ENCODE measurements at regions of chr6 and their contacts with region 1.

Region 1: DNA sequence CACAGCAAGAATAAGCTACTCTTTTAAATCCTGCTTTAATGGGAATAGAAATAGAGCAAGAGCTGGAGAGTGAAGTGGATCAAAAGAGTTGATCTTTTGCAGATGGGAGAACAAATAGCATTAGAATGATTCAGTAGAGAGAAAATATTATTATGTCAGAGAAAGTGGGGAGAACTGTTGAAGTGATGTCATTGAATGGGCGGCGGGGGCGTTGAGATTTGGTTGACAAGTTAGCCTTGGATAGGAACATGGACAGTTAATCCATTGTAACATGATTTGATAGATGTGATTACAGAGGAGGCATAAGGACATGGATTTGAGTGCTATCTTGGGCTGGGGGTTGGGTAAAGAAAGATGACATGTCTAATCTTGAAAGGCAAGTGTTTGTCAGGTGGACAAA is 9.2 kb downstream of the ATAT1 start:
- DNase-seq: no peak
- H3K4me3 ChIP-seq: no peak overlapping the region
- H3K27ac ChIP-seq: no peak overlapping the region
- H3K4me1 ChIP-seq: no peaks in the 10 kb centered on the region
- H3K27me3 ChIP-seq: no peaks in the 10 kb centered on the region
- CTCF ChIP-seq: no peak
- POLR2A ChIP-seq: no peak

Region 2: DNA sequence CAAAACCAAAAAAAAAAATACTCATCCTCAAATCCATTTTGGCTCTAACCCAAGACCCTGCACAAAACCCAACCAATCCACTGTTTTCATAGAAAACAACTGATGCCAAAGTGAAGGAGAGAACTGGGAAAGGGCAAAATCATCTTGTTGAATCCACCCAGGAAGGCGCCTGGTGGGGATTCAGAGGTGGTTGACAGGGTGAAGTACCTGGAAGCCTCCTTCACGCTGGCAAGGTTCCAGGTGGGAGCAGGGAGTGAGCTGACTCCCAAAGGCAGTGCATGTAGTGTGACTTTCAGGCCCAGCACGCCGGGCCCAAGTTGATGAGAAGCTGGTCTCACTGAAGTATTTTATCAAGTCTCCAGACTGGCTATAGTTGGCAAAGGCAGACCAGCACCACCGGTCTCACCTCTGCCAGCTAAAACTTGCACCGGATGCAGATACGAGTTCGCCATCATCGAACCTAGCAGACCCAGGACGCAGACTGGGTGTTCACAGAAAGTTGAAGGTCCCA is 35.3 kb before region 1 on chr6:
- intact Hi-C with region 1: no loop called
- DNase-seq: no peak
- H3K4me3 ChIP-seq: no peak overlapping the region
- H3K27ac ChIP-seq: no peak overlapping the region
- H3K4me1 ChIP-seq: no peaks in the 10 kb centered on the region
- H3K27me3 ChIP-seq: no peaks in the 10 kb centered on the region
- CTCF ChIP-seq: no peak
- POLR2A ChIP-seq: no peak

Region 3: GRCh38 chr6:30690403-30691207 is 54.8 kb after region 1 on chr6 and contains the start of gene NRM:
- intact Hi-C with region 1: loop called (anchors 2 kb)
- DNase-seq: peak; percentile 81 to 90
- H3K4me3 ChIP-seq: peak within 1 kb of the TSS; percentile 65 to 72 (median 66)
- H3K27ac ChIP-seq: peak within 1 kb of the TSS; percentile 96 to 97
- H3K4me1 ChIP-seq: peaks cover 5 to 18% of the 10 kb centered on the region in 2 donors
- H3K27me3 ChIP-seq: no peaks in the 10 kb centered on the region
- CTCF ChIP-seq: no peak
- POLR2A ChIP-seq: no peak
- total RNA-seq, gene NRM: 1.8 to 4.0 (median 2.3) TPM